Mammary epithelial cell (primary cell): ENCODE measurements at regions of chr4 and their contacts with region 1.

Region 1: GRCh38 chr4:101347557-101348366 is 436 bp upstream of the PPP3CA start:
- DNase-seq: peak; percentile 96
- H3K4me3 ChIP-seq: peak overlapping the region; percentile 77 to 97 (median 96)
- H3K27ac ChIP-seq: peak overlapping the region; percentile 96
- H3K4me1 ChIP-seq: peaks cover 31% of the 10 kb centered on the region
- H3K27me3 ChIP-seq: no peaks in the 10 kb centered on the region
- CTCF ChIP-seq: peak in 1 of 2 donors; percentile 14

Region 2: DNA sequence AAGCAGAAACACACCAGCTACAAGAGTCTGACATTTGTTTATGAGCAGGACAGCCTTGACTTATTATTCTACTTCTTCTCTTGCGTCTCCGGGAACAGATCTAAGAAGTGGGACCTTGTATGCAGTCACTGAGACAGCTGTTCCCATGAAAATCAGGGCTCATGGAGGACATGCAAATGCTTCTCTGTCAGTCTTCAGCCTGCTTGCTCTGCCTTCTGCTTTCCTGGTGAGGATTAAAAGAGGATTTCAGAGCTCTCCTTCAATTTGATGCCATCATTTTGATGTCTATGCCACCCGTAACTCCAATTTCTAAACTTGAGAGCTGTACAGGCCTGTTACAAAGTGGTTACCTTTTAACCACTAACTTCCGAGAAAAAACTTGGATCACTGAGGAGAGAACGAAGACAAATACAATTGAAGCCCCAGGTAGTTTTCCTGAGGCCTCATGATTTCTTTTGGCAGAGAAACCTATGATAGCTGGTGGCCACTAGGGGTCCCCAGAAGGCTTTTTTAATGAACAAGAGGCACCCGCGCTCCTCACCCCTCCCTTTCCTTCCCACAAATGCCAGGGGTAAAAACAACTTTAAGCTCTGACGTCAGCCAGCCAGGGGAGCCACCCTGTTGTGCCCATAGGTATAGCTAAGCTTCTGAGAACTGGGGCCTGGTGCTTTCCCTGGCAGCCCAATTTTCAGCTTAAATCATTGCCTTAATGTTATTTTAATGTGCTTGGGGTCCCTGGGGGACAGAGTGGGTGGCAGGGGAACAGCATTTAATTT is 1254.5 kb before region 1 on chr4:
- CTCF ChIA-PET with region 1: no interaction called
- dilution Hi-C with region 1: no loop called
- in situ Hi-C with region 1: no loop called
- intact Hi-C with region 1: loop called (anchors 5 kb)
- DNase-seq: peak; percentile 88
- H3K4me3 ChIP-seq: no peak overlapping the region
- H3K27ac ChIP-seq: peak overlapping the region; percentile 64
- H3K4me1 ChIP-seq: peaks cover 4% of the 10 kb centered on the region
- H3K27me3 ChIP-seq: no peaks in the 10 kb centered on the region
- CTCF ChIP-seq: peak; percentile 72 to 85

Region 3: DNA sequence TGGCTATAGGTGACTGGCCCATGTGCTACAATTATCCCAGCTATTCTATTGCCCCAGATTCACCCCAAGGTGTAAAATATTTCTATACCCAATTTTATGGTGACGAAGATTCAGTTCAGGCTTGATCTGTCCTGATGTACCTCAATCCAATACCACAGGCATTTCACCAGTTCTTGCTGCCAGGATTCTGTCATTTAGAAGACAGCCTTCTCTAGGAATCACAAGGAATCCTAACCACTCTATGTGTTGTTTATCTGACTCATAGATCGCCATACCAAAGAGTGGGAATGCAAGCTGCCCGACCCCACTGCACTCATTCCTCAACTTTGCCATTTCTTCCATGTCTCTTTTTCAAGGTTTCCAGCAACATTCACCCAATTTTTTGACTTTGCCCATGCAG is 475.0 kb before region 1 on chr4:
- CTCF ChIA-PET with region 1: no interaction called
- dilution Hi-C with region 1: no loop called
- in situ Hi-C with region 1: no loop called
- intact Hi-C with region 1: no loop called
- DNase-seq: peak; percentile 27
- H3K4me3 ChIP-seq: no peak overlapping the region
- H3K27ac ChIP-seq: no peak overlapping the region
- H3K4me1 ChIP-seq: peaks cover 12% of the 10 kb centered on the region
- H3K27me3 ChIP-seq: no peaks in the 10 kb centered on the region
- CTCF ChIP-seq: no peak

Region 4: GRCh38 chr4:101169044-101170014 is 178.4 kb before region 1 on chr4:
- CTCF ChIA-PET with region 1: no interaction called
- dilution Hi-C with region 1: no loop called
- in situ Hi-C with region 1: loop called in 1 of 2 experiments (anchors 10 kb)
- intact Hi-C with region 1: loop called (anchors 1 kb)
- DNase-seq: peak; percentile 58
- H3K4me3 ChIP-seq: no peak overlapping the region
- H3K27ac ChIP-seq: no peak overlapping the region
- H3K4me1 ChIP-seq: peaks cover 28% of the 10 kb centered on the region
- H3K27me3 ChIP-seq: no peaks in the 10 kb centered on the region
- CTCF ChIP-seq: peak; percentile 80 to 83

Region 5: GRCh38 chr4:101232074-101232776 is 115.5 kb before region 1 on chr4:
- CTCF ChIA-PET with region 1: no interaction called
- dilution Hi-C with region 1: no loop called
- in situ Hi-C with region 1: no loop called
- intact Hi-C with region 1: loop called (anchors 2 kb)
- DNase-seq: peak; percentile 86
- H3K4me3 ChIP-seq: no peak overlapping the region
- H3K27ac ChIP-seq: peak overlapping the region; percentile 66
- H3K4me1 ChIP-seq: peaks cover 9% of the 10 kb centered on the region
- H3K27me3 ChIP-seq: no peaks in the 10 kb centered on the region
- CTCF ChIP-seq: peak in 1 of 2 donors; percentile 5

Region 6: DNA sequence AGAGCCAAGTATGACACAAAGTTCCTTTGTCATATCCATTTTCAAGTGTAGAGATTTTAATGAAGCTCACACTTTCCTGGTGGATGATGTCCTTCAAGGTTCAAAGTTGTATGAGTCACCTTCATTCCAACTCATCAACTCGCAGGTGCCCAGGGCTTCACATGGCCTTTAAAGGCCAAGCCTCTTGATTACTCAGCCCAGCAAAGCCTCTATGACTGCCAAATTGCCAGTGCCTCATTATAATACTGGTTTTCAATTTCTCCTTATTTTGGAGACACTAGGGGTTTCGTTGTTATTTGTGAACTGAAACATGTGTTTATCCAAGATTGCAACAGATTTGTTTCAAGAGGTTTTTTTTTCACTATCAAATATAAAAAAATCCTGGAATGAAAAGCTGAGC is 45.5 kb after region 1 on chr4:
- CTCF ChIA-PET with region 1: no interaction called
- dilution Hi-C with region 1: no loop called
- in situ Hi-C with region 1: no loop called
- intact Hi-C with region 1: loop called (anchors 2 kb)
- DNase-seq: peak; percentile 77
- H3K4me3 ChIP-seq: no peak overlapping the region
- H3K27ac ChIP-seq: no peak overlapping the region
- H3K4me1 ChIP-seq: no peaks in the 10 kb centered on the region
- H3K27me3 ChIP-seq: no peaks in the 10 kb centered on the region
- CTCF ChIP-seq: no peak

Region 7: DNA sequence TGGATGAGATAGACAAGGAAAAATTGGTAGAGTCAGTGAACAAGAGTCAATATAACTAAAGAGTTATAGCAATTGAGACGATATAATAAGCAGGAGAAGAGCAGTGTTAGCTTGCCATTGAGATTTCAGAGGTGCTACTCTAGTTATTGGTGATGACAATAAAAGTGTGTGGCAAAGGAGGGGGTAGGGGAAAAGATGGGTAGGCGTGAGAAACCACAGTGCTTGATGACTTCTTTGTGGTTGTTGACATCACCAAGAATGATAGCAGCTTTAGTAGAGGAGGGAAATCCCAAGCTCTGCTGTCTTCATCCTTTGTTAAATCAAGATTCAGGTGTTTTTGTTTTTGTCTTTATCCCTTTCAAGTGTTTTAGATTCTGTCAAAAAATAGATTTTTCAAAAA is 179.4 kb after region 1 on chr4:
- CTCF ChIA-PET with region 1: no interaction called
- dilution Hi-C with region 1: no loop called
- in situ Hi-C with region 1: no loop called
- intact Hi-C with region 1: loop called (anchors 10 kb)
- DNase-seq: peak; percentile 72
- H3K4me3 ChIP-seq: no peak overlapping the region
- H3K27ac ChIP-seq: no peak overlapping the region
- H3K4me1 ChIP-seq: no peaks in the 10 kb centered on the region
- H3K27me3 ChIP-seq: peaks cover 2% of the 10 kb centered on the region
- CTCF ChIP-seq: no peak

Region 8: GRCh38 chr4:101730291-101731117 is 382.7 kb after region 1 on chr4:
- CTCF ChIA-PET with region 1: no interaction called
- dilution Hi-C with region 1: no loop called
- in situ Hi-C with region 1: no loop called
- intact Hi-C with region 1: loop called (anchors 1 kb)
- DNase-seq: peak; percentile 53
- H3K4me3 ChIP-seq: no peak overlapping the region
- H3K27ac ChIP-seq: no peak overlapping the region
- H3K4me1 ChIP-seq: no peaks in the 10 kb centered on the region
- H3K27me3 ChIP-seq: no peaks in the 10 kb centered on the region
- CTCF ChIP-seq: peak; percentile 64 to 81

Region 9: DNA sequence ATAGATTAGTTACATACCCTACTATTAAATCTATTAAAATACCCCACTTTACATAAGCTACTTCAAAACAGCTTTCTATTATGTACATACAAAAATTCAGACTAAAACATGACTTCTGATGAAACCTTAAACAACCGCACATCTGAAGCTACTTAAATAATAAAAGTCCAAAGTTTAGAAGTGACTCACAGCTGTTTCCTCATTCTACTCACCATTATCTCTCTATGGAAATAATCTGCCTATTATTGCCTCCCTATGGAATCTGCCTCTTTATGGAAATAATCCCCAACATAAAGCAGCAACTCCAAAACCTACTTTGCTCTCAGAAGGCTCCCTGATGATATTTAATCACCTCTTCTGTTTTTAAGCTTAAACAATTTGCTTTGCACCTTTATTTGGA is 427.0 kb after region 1 on chr4:
- CTCF ChIA-PET with region 1: no interaction called
- dilution Hi-C with region 1: no loop called
- in situ Hi-C with region 1: no loop called
- intact Hi-C with region 1: no loop called
- DNase-seq: no peak
- H3K4me3 ChIP-seq: no peak overlapping the region
- H3K27ac ChIP-seq: no peak overlapping the region
- H3K4me1 ChIP-seq: no peaks in the 10 kb centered on the region
- H3K27me3 ChIP-seq: no peaks in the 10 kb centered on the region
- CTCF ChIP-seq: no peak